B cell (primary cell): ENCODE measurements at regions of chr10 and their contacts with region 1.

Region 1: DNA sequence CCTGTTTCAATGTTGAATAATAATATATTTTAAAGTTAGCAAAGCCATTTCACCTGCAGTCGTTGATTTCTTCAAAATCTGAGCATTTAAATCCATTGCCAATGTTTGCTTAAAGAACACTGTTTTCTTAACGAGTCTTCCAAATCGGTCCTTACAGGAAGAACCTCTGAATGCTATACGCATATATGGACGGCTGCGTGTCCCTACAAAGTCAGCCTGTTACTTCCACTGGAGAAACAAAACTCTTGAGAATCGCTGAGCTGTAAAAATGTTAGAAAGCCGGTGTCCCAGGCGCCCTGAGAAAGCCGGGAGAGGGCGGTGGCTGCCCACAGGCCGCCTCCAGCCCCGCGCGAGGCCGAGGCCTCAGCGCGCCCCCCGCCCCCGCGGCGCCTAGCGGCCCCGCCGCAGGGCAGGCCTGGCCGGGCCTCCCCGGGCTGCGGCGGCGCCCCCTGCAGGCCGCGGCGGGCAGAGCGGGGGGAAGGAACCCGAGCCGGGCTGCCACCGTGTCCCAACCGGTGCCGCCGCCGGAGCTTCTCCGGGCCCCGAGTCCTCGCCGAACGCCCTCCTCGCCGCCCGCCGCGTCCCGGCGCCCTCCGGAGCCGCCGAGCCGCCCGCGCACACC is at the start of gene FHIP2A:
- DNase-seq: peak; percentile 90
- ATAC-seq: peak; percentile 93
- H3K4me3 ChIP-seq: peak within 1 kb of the TSS; percentile 53 to 86 (median 78)
- H3K4me3 Mint-ChIP-seq: peak within 1 kb of the TSS; percentile 94
- H3K27ac ChIP-seq: peak within 1 kb of the TSS; percentile 57 to 83
- H3K27ac Mint-ChIP-seq: peak within 1 kb of the TSS; percentile 96
- H3K4me1 ChIP-seq: peaks cover 6 to 13% of the 10 kb centered on the region in 2 donors
- H3K4me1 Mint-ChIP-seq: peaks cover 29% of the 10 kb centered on the region
- H3K27me3 ChIP-seq: no peaks in the 10 kb centered on the region
- H3K27me3 Mint-ChIP-seq: no peaks in the 10 kb centered on the region
- CTCF ChIP-seq: peak; percentile 64
- total RNA-seq, gene FHIP2A: 18.2 and 28.6 TPM in 2 replicates

Region 2: GRCh38 chr10:113854011-113854760 is 967.2 kb before region 1 on chr10 and contains the starts of genes DCLRE1A and NHLRC2:
- CTCF ChIA-PET with region 1: no interaction called
- POLR2A ChIA-PET with region 1: no interaction called
- intact Hi-C with region 1: loop called (anchors 2 kb)
- DNase-seq: peak; percentile 89
- ATAC-seq: peak; percentile 70
- H3K4me3 ChIP-seq: peak within 1 kb of the TSS; percentile 86 to 98 (median 90)
- H3K4me3 Mint-ChIP-seq: peak within 1 kb of the TSS; percentile 96
- H3K27ac ChIP-seq: peak within 1 kb of the TSS; percentile 86 to 95
- H3K27ac Mint-ChIP-seq: peak within 1 kb of the TSS; percentile 99
- H3K4me1 ChIP-seq: peaks cover 23 to 33% of the 10 kb centered on the region in 2 donors
- H3K4me1 Mint-ChIP-seq: peaks cover 48% of the 10 kb centered on the region
- H3K27me3 ChIP-seq: no peaks in the 10 kb centered on the region
- H3K27me3 Mint-ChIP-seq: no peaks in the 10 kb centered on the region
- CTCF ChIP-seq: no peak
- total RNA-seq, gene DCLRE1A: 1.9 and 2.4 TPM in 2 replicates
- total RNA-seq, gene NHLRC2: 54.1 and 59.8 TPM in 2 replicates

Region 3: DNA sequence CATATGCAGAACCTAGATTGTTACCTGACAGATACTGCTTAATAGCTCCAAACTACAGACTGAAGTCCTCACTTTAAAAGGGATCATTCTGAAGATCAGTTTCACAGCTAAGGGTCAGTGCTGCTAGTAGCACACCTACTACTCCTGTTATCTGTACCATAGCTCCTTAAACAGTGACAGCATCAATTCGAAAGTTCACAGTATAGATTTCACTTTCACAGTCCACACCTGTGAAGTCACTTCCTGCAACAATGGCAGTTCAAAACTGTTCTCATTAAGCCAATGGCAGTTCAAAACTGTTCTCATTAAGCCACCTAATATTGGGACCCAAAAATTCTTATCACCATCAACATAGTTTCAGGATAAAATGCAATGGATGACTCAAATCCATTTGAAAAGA is 10.5 kb before region 1 on chr10:
- CTCF ChIA-PET with region 1: interaction called, 15 read pairs
- POLR2A ChIA-PET with region 1: no interaction called
- intact Hi-C with region 1: no loop called
- DNase-seq: no peak
- ATAC-seq: no peak
- H3K4me3 ChIP-seq: no peak overlapping the region
- H3K4me3 Mint-ChIP-seq: no peak overlapping the region
- H3K27ac ChIP-seq: no peak overlapping the region
- H3K27ac Mint-ChIP-seq: peak overlapping the region; percentile 53
- H3K4me1 ChIP-seq: peaks cover 0 to 6% of the 10 kb centered on the region in 2 donors
- H3K4me1 Mint-ChIP-seq: peaks cover 12% of the 10 kb centered on the region
- H3K27me3 ChIP-seq: no peaks in the 10 kb centered on the region
- H3K27me3 Mint-ChIP-seq: no peaks in the 10 kb centered on the region
- CTCF ChIP-seq: no peak

Region 4: GRCh38 chr10:114869520-114869892 is 48.1 kb after region 1 on chr10:
- CTCF ChIA-PET with region 1: no interaction called
- POLR2A ChIA-PET with region 1: no interaction called
- intact Hi-C with region 1: no loop called
- DNase-seq: no peak
- ATAC-seq: no peak
- H3K4me3 ChIP-seq: no peak overlapping the region
- H3K4me3 Mint-ChIP-seq: no peak overlapping the region
- H3K27ac ChIP-seq: no peak overlapping the region
- H3K27ac Mint-ChIP-seq: no peak overlapping the region
- H3K4me1 ChIP-seq: no peaks in the 10 kb centered on the region
- H3K4me1 Mint-ChIP-seq: no peaks in the 10 kb centered on the region
- H3K27me3 ChIP-seq: peaks cover 0 to 5% (median 0%) of the 10 kb centered on the region in 4 experiments
- H3K27me3 Mint-ChIP-seq: peaks cover 10% of the 10 kb centered on the region
- CTCF ChIP-seq: no peak

Region 5: GRCh38 chr10:114937962-114938855 is 116.8 kb after region 1 on chr10 and contains the start of gene TRUB1:
- CTCF ChIA-PET with region 1: interaction called, 11 read pairs
- POLR2A ChIA-PET with region 1: interaction called, 4 read pairs
- intact Hi-C with region 1: loop called (anchors 1 kb)
- DNase-seq: peak; percentile 93
- ATAC-seq: peak; percentile 100
- H3K4me3 ChIP-seq: peak within 1 kb of the TSS; percentile 81 to 99 (median 93)
- H3K4me3 Mint-ChIP-seq: peak within 1 kb of the TSS; percentile 95
- H3K27ac ChIP-seq: peak within 1 kb of the TSS; percentile 77 to 83
- H3K27ac Mint-ChIP-seq: peak within 1 kb of the TSS; percentile 92
- H3K4me1 ChIP-seq: peaks cover 15 to 16% of the 10 kb centered on the region in 2 donors
- H3K4me1 Mint-ChIP-seq: peaks cover 34% of the 10 kb centered on the region
- H3K27me3 ChIP-seq: no peaks in the 10 kb centered on the region
- H3K27me3 Mint-ChIP-seq: no peaks in the 10 kb centered on the region
- CTCF ChIP-seq: no peak
- total RNA-seq, gene TRUB1: 11.2 and 15.7 TPM in 2 replicates